ENCODE measurements at regions of chr18 and their contacts with region 1.

Region 1: GRCh38 chr18:48605408-48605845 is 66.6 kb downstream of the CTIF start:
- DNase-seq: peak; percentile 71
- ATAC-seq: peak; percentile 100
- H3K4me3 Mint-ChIP-seq: no peak overlapping the region
- H3K27ac Mint-ChIP-seq: no peak overlapping the region
- H3K4me1 Mint-ChIP-seq: peaks cover 13% of the 10 kb centered on the region
- H3K27me3 Mint-ChIP-seq: no peaks in the 10 kb centered on the region
- CTCF ChIP-seq: no peak

Region 2: GRCh38 chr18:48475635-48476549 is 129.5 kb before region 1 on chr18:
- CTCF ChIA-PET with region 1: interaction called, 14 read pairs
- POLR2A ChIA-PET with region 1: no interaction called
- DNase-seq: peak; percentile 62
- ATAC-seq: peak; percentile 99
- H3K4me3 Mint-ChIP-seq: no peak overlapping the region
- H3K27ac Mint-ChIP-seq: no peak overlapping the region
- H3K4me1 Mint-ChIP-seq: no peaks in the 10 kb centered on the region
- H3K27me3 Mint-ChIP-seq: peaks cover 10% of the 10 kb centered on the region
- CTCF ChIP-seq: peak; percentile 75

Region 3: GRCh38 chr18:48545757-48546321 is 59.6 kb before region 1 on chr18:
- CTCF ChIA-PET with region 1: interaction called, 27 read pairs
- POLR2A ChIA-PET with region 1: interaction called, 5 read pairs
- DNase-seq: peak; percentile 80
- ATAC-seq: peak; percentile 28
- H3K4me3 Mint-ChIP-seq: no peak overlapping the region
- H3K27ac Mint-ChIP-seq: peak overlapping the region; percentile 43; the same call in 1 of the 2 replicates
- H3K4me1 Mint-ChIP-seq: peaks cover 78% of the 10 kb centered on the region
- H3K27me3 Mint-ChIP-seq: peaks cover 30% of the 10 kb centered on the region
- CTCF ChIP-seq: no peak

Region 4: GRCh38 chr18:48590678-48591077 is 14.7 kb before region 1 on chr18:
- CTCF ChIA-PET with region 1: interaction called, 14 read pairs
- POLR2A ChIA-PET with region 1: interaction called, 3 read pairs
- DNase-seq: no peak
- ATAC-seq: no peak
- H3K4me3 Mint-ChIP-seq: no peak overlapping the region
- H3K27ac Mint-ChIP-seq: no peak overlapping the region
- H3K4me1 Mint-ChIP-seq: 0 out of 2 replicates have a peak, but pooled peaks cover 4% of the 10 kb centered on the region
- H3K27me3 Mint-ChIP-seq: no peaks in the 10 kb centered on the region
- CTCF ChIP-seq: no peak

Region 5: GRCh38 chr18:48649231-48649630 is 43.8 kb after region 1 on chr18:
- CTCF ChIA-PET with region 1: interaction called, 12 read pairs
- POLR2A ChIA-PET with region 1: no interaction called
- DNase-seq: peak; percentile 69
- ATAC-seq: peak; percentile 98
- H3K4me3 Mint-ChIP-seq: no peak overlapping the region
- H3K27ac Mint-ChIP-seq: no peak overlapping the region
- H3K4me1 Mint-ChIP-seq: peaks cover 13% of the 10 kb centered on the region
- H3K27me3 Mint-ChIP-seq: peaks cover 3% of the 10 kb centered on the region; the same call in 1 of the 2 replicates
- CTCF ChIP-seq: no peak

Region 6: GRCh38 chr18:48715711-48716361 is 110.4 kb after region 1 on chr18:
- CTCF ChIA-PET with region 1: no interaction called
- POLR2A ChIA-PET with region 1: no interaction called
- DNase-seq: no peak
- ATAC-seq: no peak
- H3K4me3 Mint-ChIP-seq: no peak overlapping the region
- H3K27ac Mint-ChIP-seq: peak overlapping the region; percentile 69; the same call in 1 of the 2 replicates
- H3K4me1 Mint-ChIP-seq: peaks cover 12% of the 10 kb centered on the region
- H3K27me3 Mint-ChIP-seq: no peaks in the 10 kb centered on the region
- CTCF ChIP-seq: no peak

Region 7: DNA sequence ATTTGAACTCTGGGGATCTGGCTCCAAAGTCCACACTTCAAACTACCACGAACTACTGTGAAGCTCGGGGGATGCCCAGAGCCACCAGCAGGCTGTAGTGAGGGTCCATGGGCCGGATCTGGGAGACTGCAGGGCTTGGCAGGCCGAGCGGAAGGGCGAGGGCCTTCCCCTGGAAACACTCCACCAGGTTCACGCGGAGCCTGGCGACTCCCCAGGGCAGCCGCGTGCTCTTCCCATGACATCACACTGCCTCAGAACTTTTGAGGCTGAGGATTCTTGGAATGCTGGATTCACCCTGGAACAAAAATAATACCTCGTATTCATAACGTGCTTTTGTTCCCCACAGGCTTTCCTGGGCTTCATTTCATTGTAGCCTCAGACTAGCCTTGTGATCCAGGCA is 144.3 kb after region 1 on chr18:
- CTCF ChIA-PET with region 1: no interaction called
- POLR2A ChIA-PET with region 1: no interaction called
- DNase-seq: no peak
- ATAC-seq: no peak
- H3K4me3 Mint-ChIP-seq: no peak overlapping the region
- H3K27ac Mint-ChIP-seq: no peak overlapping the region
- H3K4me1 Mint-ChIP-seq: no peaks in the 10 kb centered on the region
- H3K27me3 Mint-ChIP-seq: no peaks in the 10 kb centered on the region
- CTCF ChIP-seq: no peak

Region 8: GRCh38 chr18:48902023-48902855 is 296.8 kb after region 1 on chr18:
- CTCF ChIA-PET with region 1: no interaction called
- POLR2A ChIA-PET with region 1: no interaction called
- DNase-seq: no peak
- ATAC-seq: no peak; the same call in 1 of the 2 replicates
- H3K4me3 Mint-ChIP-seq: no peak overlapping the region
- H3K27ac Mint-ChIP-seq: no peak overlapping the region
- H3K4me1 Mint-ChIP-seq: no peaks in the 10 kb centered on the region; the same call in none of the 2 replicates
- H3K27me3 Mint-ChIP-seq: no peaks in the 10 kb centered on the region; the same call in 1 of the 2 replicates
- CTCF ChIP-seq: no peak